ENCODE measurements at regions of chr17 and their contacts with region 1.

Region 1: GRCh38 chr17:50638851-50639767 is 4.4 kb downstream of the ABCC3 start:
- DNase-seq: peak; percentile 96 to 100
- ATAC-seq: peak; percentile 77 to 80
- H3K4me3 ChIP-seq: peak overlapping the region; percentile 92; the same call in 1 of the 3 replicates
- H3K27ac ChIP-seq: peak overlapping the region; percentile 99 to 100
- H3K4me1 ChIP-seq: peaks cover 78% of the 10 kb centered on the region
- CTCF ChIP-seq: no peak
- EP300 ChIP-seq: peak; percentile 85 to 95
- POLR2A ChIP-seq: no peak; the same call in 1 of the 2 replicates
- RAD21 ChIP-seq: peak; percentile 32 to 55

Region 2: GRCh38 chr17:50541716-50542688 is 97.1 kb before region 1 on chr17:
- CTCF ChIA-PET with region 1: interaction called, 5 read pairs
- POLR2A ChIA-PET with region 1: interaction called, 17 read pairs
- DNase-seq: peak; percentile 80 to 96
- ATAC-seq: peak; percentile 71 to 85
- H3K4me3 ChIP-seq: peak overlapping the region; percentile 51
- H3K27ac ChIP-seq: peak overlapping the region; percentile 85 to 90
- H3K4me1 ChIP-seq: peaks cover 45% of the 10 kb centered on the region
- CTCF ChIP-seq: peak; percentile 28; the same call in 1 of the 3 replicates
- EP300 ChIP-seq: no peak
- POLR2A ChIP-seq: peak; percentile 92
- RAD21 ChIP-seq: peak in 1 of 2 experiments; percentile 22; a peak in 1 of 5 replicates

Region 3: DNA sequence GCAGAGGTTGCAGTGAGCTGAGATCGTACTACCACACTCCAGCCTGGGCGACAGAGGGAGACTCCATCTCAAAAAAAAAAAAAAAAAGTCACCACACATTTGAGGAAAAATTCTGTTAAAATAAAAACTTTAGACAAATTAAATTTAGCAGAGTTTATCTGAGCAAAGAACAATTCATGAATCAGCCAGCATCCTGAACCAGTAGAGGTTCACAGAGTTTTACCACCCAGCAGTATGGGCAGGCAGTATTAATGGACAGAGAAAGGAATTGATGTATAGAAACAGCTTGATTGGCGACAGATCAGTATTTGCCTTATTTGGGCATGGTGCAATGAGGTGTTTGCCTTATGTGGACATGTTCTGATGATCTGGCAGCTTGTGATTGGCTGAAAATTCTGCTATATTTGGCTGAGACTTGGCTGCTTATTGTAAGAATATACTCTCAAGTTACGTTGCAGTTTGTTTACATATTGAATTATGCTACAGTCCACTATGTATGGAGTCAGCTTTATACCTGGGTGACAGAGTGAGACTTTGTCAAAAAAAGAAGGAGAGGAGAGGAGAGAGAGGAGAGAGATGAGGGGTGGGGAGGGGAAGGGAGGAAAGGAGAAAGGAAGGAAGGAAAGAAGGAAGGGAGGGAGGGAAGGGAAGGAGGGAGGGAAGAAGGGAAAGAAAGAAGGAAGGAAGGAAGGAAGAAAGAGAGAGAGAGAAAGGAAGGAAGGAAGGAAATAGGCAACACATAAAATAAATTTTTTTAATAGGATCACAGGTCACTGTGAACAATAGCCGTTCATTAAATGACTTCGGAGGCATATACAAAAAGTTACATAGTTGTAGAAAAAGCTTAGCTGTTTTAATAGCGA is 10.2 kb after region 1 on chr17:
- CTCF ChIA-PET with region 1: interaction called, 59 read pairs
- POLR2A ChIA-PET with region 1: interaction called, 65 read pairs
- DNase-seq: peak in 1 of 2 experiments; percentile 90
- ATAC-seq: peak; percentile 48 to 63; a peak in 5 of 6 replicates
- H3K4me3 ChIP-seq: no peak overlapping the region
- H3K27ac ChIP-seq: peak overlapping the region; percentile 51 to 99
- H3K4me1 ChIP-seq: peaks cover 95% of the 10 kb centered on the region
- CTCF ChIP-seq: no peak
- EP300 ChIP-seq: no peak
- POLR2A ChIP-seq: no peak
- RAD21 ChIP-seq: no peak

Region 4: DNA sequence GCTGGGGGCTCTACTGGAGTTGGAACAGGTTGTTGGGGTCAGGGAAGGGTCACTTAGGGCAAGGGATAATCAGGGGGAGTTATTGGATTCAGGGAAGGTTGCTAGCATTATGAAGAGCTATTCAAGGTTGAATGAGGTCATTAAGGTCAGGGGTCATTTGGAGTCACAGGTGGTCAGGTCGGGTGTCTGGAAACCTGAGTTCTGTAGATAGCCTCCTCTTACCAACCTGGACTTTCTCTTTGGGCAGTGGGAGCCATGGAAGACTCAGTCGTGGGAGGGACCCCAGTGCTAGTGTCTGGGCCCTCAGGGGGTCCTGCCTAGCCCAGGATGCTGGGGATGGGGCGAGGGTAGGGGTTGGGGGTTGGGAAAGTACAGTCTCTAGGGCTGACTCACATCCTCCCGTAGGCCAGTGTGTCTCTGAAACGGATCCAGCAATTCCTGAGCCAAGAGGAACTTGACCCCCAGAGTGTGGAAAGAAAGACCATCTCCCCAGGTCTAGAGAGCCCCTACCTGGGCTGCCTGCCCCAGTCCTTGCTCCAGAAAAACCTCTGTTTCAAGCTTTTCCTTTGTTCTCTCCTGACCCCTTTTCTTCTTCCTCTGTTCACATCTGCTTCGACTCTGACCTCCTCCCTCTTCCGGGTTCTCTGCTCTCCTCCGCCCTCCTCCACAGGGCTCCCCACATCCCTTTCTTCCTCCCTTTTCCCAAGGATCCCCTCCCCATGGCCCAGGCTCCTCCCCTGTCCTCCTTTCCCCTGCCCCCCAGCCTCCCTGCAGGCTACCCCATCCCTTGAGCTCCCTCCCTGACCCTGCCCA is 29.1 kb after region 1 on chr17:
- CTCF ChIA-PET with region 1: interaction called, 2,097 read pairs
- POLR2A ChIA-PET with region 1: interaction called, 237 read pairs
- DNase-seq: peak; percentile 71 to 73
- ATAC-seq: peak; percentile 58 to 62
- H3K4me3 ChIP-seq: 0 out of 3 replicates have a peak overlapping the region, but pooled peaks have one; percentile 0
- H3K27ac ChIP-seq: peak overlapping the region; percentile 98
- H3K4me1 ChIP-seq: peaks cover 100% of the 10 kb centered on the region
- CTCF ChIP-seq: no peak
- EP300 ChIP-seq: peak; percentile 60 to 64; a peak in 2 of 5 replicates
- POLR2A ChIP-seq: no peak
- RAD21 ChIP-seq: 0 out of 5 replicates have a peak, but pooled peaks of 1 of the 2 experiments have one; percentile 27

Region 5: GRCh38 chr17:50719144-50719923 is 80.2 kb after region 1 on chr17 and contains the start of gene LUC7L3:
- CTCF ChIA-PET with region 1: no interaction called
- POLR2A ChIA-PET with region 1: interaction called, 18 read pairs
- DNase-seq: peak; percentile 95 to 98
- ATAC-seq: peak; percentile 92 to 95
- H3K4me3 ChIP-seq: peak within 1 kb of the TSS; percentile 66
- H3K27ac ChIP-seq: peak within 1 kb of the TSS; percentile 85 to 95
- H3K4me1 ChIP-seq: peaks cover 33% of the 10 kb centered on the region
- CTCF ChIP-seq: no peak
- EP300 ChIP-seq: no peak
- POLR2A ChIP-seq: peak; percentile 80
- RAD21 ChIP-seq: no peak
- polyA plus RNA-seq, gene LUC7L3: 117 and 209 TPM in 2 replicates

Region 6: DNA sequence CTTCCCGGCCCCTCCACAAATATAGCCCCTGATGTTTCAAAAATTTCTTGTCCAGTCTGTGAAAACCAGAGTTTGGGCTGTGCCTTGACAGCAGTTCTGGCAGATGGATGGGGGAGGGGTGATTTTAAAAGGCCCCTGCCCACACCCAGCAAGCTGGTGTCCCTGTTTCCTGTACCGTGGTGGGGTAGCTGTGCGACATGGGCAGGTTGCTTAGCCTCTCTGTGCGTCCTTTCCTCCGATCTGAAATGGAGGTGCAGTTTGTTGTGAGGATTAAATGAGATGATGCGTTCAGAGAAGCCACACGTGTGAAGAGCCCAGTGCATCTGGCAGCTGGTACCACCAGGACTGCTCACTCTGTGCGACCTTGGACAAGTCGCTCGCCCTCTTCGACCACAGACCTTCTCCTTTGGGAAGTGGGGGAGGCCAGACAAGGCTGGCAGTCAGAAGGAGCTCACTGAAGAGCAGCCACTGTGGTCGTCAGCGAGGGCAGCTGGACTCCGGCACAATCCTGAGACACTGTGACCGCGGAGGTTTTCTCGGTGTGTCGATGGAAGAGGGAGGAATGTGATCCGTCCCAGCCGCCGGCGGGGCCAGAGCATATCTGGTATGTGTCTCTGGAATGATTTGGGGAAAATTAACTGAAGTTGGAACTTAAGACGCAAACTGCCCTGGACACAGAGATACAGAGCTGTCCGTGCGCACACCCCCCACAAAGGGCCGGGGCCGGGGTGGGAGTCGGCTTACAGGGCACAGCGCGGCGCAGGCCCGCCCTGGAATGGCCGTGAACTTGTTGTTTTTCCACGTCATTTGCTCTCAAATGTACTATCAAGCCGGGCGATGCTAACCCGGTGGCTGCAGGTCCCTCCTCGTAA is 195.6 kb after region 1 on chr17:
- CTCF ChIA-PET with region 1: no interaction called
- POLR2A ChIA-PET with region 1: no interaction called
- DNase-seq: no peak
- ATAC-seq: no peak
- H3K4me3 ChIP-seq: no peak overlapping the region
- H3K27ac ChIP-seq: no peak overlapping the region
- H3K4me1 ChIP-seq: no peaks in the 10 kb centered on the region
- CTCF ChIP-seq: no peak
- EP300 ChIP-seq: no peak
- POLR2A ChIP-seq: no peak
- RAD21 ChIP-seq: no peak